Heart right ventricle (tissue), 16 donors: ENCODE measurements at regions of chr12 and their contacts with region 1.

Region 1: GRCh38 chr12:50734409-50735263 is 29.3 kb upstream of the ATF1 start:
- DNase-seq: no peak
- ATAC-seq: peak in 6 of 8 donors; percentile 24 to 68 (median 52)
- H3K4me3 ChIP-seq: no peak overlapping the region
- H3K27ac ChIP-seq: no peak overlapping the region
- H3K4me1 ChIP-seq: no peaks in the 10 kb centered on the region
- H3K27me3 ChIP-seq: no peaks in the 10 kb centered on the region
- CTCF ChIP-seq: peak; percentile 31 to 71 (median 60)

Region 2: DNA sequence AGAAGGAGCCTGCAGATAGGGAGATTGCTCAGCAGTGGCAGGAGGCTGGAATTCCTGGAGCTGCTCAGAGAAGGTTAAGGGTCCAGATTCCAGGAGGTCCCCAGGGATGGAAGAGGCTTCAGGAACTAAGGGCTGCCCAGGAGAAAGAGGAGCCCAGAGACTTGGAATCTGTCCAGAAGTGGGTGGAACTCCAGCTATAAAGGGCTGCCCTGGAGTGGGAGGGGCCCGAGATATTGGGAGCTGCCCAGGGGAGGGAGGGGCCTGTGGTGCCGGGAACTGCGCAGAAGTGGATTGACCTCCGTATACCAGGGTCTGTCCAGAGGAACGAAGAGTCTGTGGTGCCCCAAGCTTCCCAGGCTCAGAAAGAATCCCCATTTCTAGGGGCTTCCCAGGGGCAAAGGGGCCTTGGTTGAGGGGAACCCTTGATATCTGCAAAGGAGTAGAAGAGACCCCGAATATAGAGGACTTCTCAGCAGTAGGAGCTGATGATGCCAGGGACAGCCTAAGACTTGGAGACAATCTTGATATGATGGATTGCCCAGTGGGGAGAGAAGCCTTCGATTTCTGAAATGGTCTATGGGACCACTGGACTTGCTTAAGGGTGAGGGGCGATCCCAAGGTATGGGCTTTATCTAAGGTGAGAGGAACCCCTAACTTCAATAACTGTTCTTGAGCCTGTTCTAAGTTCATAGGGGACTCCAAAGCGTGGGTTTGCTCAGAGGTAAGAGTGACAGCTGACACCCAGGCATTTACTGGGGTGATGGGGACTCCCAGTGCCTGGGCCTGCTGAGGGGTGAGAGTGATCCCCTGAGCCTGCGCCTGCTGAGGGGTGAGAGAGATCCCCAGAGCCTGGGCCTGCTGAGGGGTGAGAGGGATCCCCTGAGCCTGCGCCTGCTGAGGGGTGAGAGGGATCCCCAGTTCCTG is 383.3 kb before region 1 on chr12:
- intact Hi-C with region 1: no loop called
- DNase-seq: peak; percentile 35
- ATAC-seq: peak in 6 of 8 donors; percentile 46 to 76 (median 68)
- H3K4me3 ChIP-seq: no peak overlapping the region
- H3K27ac ChIP-seq: no peak overlapping the region
- H3K4me1 ChIP-seq: peaks cover 0 to 16% (median 6%) of the 10 kb centered on the region in 9 donors
- H3K27me3 ChIP-seq: no peaks in the 10 kb centered on the region
- CTCF ChIP-seq: no peak

Region 3: GRCh38 chr12:50453874-50454273 is 280.8 kb before region 1 on chr12:
- intact Hi-C with region 1: no loop called
- DNase-seq: no peak
- ATAC-seq: no peak
- H3K4me3 ChIP-seq: no peak overlapping the region
- H3K27ac ChIP-seq: no peak overlapping the region
- H3K4me1 ChIP-seq: peaks cover 0 to 15% (median 0%) of the 10 kb centered on the region in 9 donors
- H3K27me3 ChIP-seq: no peaks in the 10 kb centered on the region
- CTCF ChIP-seq: no peak

Region 4: GRCh38 chr12:50637870-50638481 is 96.7 kb before region 1 on chr12:
- intact Hi-C with region 1: loop called in 1 of 10 experiments (anchors 10 kb)
- DNase-seq: no peak
- ATAC-seq: peak in 3 of 8 donors; percentile 50 to 58 (median 56)
- H3K4me3 ChIP-seq: no peak overlapping the region
- H3K27ac ChIP-seq: no peak overlapping the region
- H3K4me1 ChIP-seq: peaks cover 0 to 50% (median 39%) of the 10 kb centered on the region in 9 donors
- H3K27me3 ChIP-seq: no peaks in the 10 kb centered on the region
- CTCF ChIP-seq: peak; percentile 38 to 85 (median 72)